CD8-positive, alpha-beta T cell (primary cell): ENCODE measurements at regions of chr17 and their contacts with region 1.

Region 1: GRCh38 chr17:7351665-7352501 is at the start of gene KCTD11:
- DNase-seq: peak in 8 of 9 experiments; percentile 64 to 90 (median 80)
- ATAC-seq: peak; percentile 48
- H3K4me3 ChIP-seq: peak within 1 kb of the TSS; percentile 62 to 73
- H3K4me3 Mint-ChIP-seq: peak within 1 kb of the TSS; percentile 87
- H3K27ac ChIP-seq: peak within 1 kb of the TSS; percentile 53 to 87
- H3K27ac Mint-ChIP-seq: peak within 1 kb of the TSS; percentile 88
- H3K4me1 ChIP-seq: peaks cover 42% of the 10 kb centered on the region
- H3K4me1 Mint-ChIP-seq: peaks cover 38% of the 10 kb centered on the region
- H3K27me3 ChIP-seq: no peaks in the 10 kb centered on the region
- H3K27me3 Mint-ChIP-seq: no peaks in the 10 kb centered on the region
- CTCF ChIP-seq: peak; percentile 20
- total RNA-seq, gene KCTD11: 1.4 to 1.8 TPM

Region 2: DNA sequence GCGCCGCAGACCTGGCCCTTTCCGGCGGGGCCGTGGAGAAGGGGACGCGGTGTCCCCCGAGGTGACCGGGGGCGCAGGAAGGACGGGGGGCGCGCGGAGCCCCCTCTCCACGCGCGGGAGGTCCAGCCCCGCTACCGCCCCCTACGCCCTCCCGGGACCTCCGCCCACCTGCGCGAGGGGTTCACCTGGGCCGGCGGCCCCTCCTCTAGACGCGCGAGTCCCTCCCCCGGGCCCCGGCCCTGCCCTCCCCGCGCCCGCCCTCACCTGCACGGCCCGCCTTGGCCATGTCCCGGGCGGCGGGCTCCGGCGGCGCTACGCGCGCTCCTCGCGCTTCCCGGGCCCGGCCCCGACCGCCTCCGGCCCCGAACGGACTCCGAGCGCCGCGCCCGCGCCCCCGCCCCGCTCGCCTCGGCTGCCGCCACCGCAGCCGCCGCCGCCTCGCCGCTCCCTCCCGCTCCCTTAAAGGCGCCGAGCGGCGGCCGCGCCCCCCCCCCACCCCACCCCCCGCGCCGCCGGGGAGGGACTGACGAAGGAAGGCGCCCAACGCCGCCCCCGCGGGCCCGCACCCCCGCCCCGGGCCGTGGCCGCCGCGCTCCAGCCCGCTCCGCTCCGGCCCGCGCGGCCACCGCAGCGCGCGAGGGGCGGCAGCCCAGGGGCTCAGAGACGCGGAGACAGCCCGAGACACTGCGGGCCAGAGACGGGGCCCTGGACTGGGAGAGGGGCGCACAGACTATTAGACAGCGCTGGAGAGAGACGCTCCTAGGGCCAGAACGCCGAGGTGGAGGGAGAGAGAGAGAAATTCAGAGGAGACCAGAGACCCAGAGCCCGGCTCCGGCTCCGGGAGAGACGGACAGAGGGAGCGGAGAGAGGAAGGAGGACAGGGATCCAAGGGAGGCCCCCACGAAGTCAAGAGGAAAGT is 795.5 kb before region 1 on chr17 and contains the start of gene PITPNM3:
- CTCF ChIA-PET with region 1: no interaction called
- POLR2A ChIA-PET with region 1: no interaction called
- intact Hi-C with region 1: no loop called
- DNase-seq: no peak
- ATAC-seq: peak; percentile 17
- H3K4me3 ChIP-seq: peak within 1 kb of the TSS in 1 of 2 experiments; percentile 35
- H3K4me3 Mint-ChIP-seq: peak within 1 kb of the TSS; percentile 76
- H3K27ac ChIP-seq: no peak within 1 kb of the TSS
- H3K27ac Mint-ChIP-seq: no peak within 1 kb of the TSS
- H3K4me1 ChIP-seq: peaks cover 8% of the 10 kb centered on the region
- H3K4me1 Mint-ChIP-seq: peaks cover 15% of the 10 kb centered on the region
- H3K27me3 ChIP-seq: peaks cover 14 to 21% of the 10 kb centered on the region in 2 experiments
- H3K27me3 Mint-ChIP-seq: peaks cover 50% of the 10 kb centered on the region
- CTCF ChIP-seq: no peak
- total RNA-seq, gene PITPNM3: 0.25 to 0.30 TPM

Region 3: GRCh38 chr17:7045909-7046724 is 305.8 kb before region 1 on chr17:
- CTCF ChIA-PET with region 1: interaction called, 3 read pairs
- POLR2A ChIA-PET with region 1: no interaction called
- intact Hi-C with region 1: loop called in 1 of 2 experiments (anchors 2 kb)
- DNase-seq: peak in 6 of 9 experiments; percentile 43 to 88 (median 59)
- ATAC-seq: peak; percentile 34
- H3K4me3 ChIP-seq: peak overlapping the region; percentile 42 to 58
- H3K4me3 Mint-ChIP-seq: peak overlapping the region; percentile 79
- H3K27ac ChIP-seq: peak overlapping the region; percentile 47 to 73
- H3K27ac Mint-ChIP-seq: peak overlapping the region; percentile 88
- H3K4me1 ChIP-seq: peaks cover 35% of the 10 kb centered on the region
- H3K4me1 Mint-ChIP-seq: peaks cover 36% of the 10 kb centered on the region
- H3K27me3 ChIP-seq: no peaks in the 10 kb centered on the region
- H3K27me3 Mint-ChIP-seq: no peaks in the 10 kb centered on the region
- CTCF ChIP-seq: peak; percentile 89

Region 4: DNA sequence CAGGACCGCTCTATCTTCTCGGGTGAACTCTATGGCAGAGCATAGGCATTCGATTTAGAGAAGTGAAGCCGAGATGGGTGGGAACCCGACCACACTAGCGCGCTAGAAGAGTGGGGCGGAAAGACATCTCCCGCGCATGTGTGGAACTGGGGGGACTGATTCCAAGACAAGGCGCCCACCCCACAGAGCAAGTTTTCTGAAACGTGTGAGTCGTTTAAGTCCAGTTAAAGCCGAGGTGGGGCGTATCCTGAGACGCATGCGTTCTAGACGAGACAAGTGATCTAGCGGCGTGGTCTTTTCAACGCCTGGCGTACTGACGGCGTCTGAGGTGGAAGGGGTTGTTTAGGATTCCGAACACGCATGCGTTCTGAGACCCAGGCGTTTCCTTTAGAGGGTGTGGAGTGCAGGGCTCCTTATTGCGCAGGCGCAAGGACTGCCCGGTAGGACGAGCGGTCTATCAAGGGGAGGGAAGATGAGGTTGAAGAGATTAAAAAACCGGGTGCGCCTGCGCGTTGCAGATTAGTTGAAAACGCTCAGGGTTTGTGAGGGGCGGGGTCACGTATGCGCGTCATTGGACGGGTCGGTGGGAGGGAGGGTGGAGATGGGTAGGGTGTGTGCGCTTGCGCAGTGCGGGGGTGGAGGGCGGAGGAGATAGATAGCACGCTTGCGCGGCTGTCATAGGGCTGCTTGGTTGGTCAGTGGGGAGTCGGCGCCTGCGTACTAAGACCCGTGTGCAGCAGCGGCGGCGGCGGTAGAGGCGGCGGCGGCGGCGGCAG is 44.8 kb before region 1 on chr17 and contains the start of gene EIF5A:
- CTCF ChIA-PET with region 1: interaction called, 9 read pairs
- POLR2A ChIA-PET with region 1: interaction called, 3 read pairs
- intact Hi-C with region 1: loop called (anchors 2 kb)
- DNase-seq: peak; percentile 100
- ATAC-seq: peak; percentile 67
- H3K4me3 ChIP-seq: peak within 1 kb of the TSS; percentile 66 to 92
- H3K4me3 Mint-ChIP-seq: peak within 1 kb of the TSS; percentile 98
- H3K27ac ChIP-seq: peak within 1 kb of the TSS; percentile 91 to 94
- H3K27ac Mint-ChIP-seq: peak within 1 kb of the TSS; percentile 99
- H3K4me1 ChIP-seq: peaks cover 25% of the 10 kb centered on the region
- H3K4me1 Mint-ChIP-seq: peaks cover 40% of the 10 kb centered on the region
- H3K27me3 ChIP-seq: no peaks in the 10 kb centered on the region
- H3K27me3 Mint-ChIP-seq: no peaks in the 10 kb centered on the region
- CTCF ChIP-seq: no peak
- total RNA-seq, gene EIF5A: 581 to 613 TPM

Region 5: DNA sequence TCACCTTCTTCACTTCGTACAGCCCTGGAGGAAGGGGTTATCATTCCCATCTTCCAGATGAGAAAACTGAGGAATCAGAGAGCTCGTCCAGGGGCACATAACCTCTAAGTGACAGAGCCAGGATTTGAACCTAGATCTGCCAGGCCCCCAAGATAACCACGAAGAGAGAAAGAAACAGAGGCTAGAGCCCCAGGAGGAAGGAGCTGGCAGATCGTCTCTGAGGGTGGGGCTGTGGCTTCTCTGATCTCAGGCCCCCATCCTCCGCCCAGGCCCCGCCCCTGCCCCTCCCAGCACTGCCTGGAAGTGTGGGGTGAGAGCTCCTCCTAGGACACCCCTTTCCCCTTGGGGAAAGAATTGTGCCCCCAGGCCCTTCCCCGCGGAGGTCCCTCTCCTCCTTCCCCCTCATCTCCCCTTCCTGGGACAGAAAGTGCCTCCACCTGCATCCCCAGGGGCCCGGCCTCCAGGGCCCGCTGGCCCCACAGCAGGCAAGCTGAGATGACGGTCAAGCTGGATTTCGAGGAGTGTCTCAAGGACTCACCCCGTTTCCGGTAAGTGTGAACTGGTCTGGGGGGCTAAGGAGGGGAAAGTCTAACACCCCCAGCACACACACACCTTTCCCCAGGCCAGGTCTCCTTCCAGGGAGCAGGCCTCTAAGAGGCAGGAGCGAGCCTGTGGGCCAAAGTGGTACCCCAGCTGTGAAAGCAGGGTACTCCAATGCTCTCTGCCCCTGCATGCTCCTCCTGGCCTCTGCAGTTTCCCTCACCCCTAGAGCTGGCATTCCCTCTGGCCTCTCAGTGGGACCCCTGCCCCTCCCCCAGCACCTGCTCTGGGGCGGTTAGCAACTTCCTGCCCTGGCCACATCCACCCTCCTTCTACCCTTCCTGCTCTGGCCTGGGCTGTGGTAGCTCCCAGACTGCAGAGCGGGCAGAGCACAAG is 15.4 kb before region 1 on chr17 and contains the start of gene ACAP1:
- CTCF ChIA-PET with region 1: interaction called, 22 read pairs
- POLR2A ChIA-PET with region 1: interaction called, 49 read pairs
- intact Hi-C with region 1: loop called in 1 of 2 experiments (anchors 1 kb)
- DNase-seq: peak; percentile 72 to 93 (median 89)
- ATAC-seq: peak; percentile 98
- H3K4me3 ChIP-seq: peak within 1 kb of the TSS; percentile 74 to 76
- H3K4me3 Mint-ChIP-seq: peak within 1 kb of the TSS; percentile 94
- H3K27ac ChIP-seq: peak within 1 kb of the TSS; percentile 60 to 65
- H3K27ac Mint-ChIP-seq: peak within 1 kb of the TSS; percentile 97
- H3K4me1 ChIP-seq: peaks cover 55% of the 10 kb centered on the region
- H3K4me1 Mint-ChIP-seq: peaks cover 61% of the 10 kb centered on the region
- H3K27me3 ChIP-seq: no peaks in the 10 kb centered on the region
- H3K27me3 Mint-ChIP-seq: no peaks in the 10 kb centered on the region
- CTCF ChIP-seq: no peak
- total RNA-seq, gene ACAP1: 432 to 451 TPM

Region 6: GRCh38 chr17:7383742-7384488 is 32.0 kb after region 1 on chr17:
- CTCF ChIA-PET with region 1: interaction called, 11 read pairs
- POLR2A ChIA-PET with region 1: interaction called, 4 read pairs
- intact Hi-C with region 1: loop called in 1 of 2 experiments (anchors 1 kb)
- DNase-seq: peak; percentile 60 to 91 (median 80)
- ATAC-seq: peak; percentile 94
- H3K4me3 ChIP-seq: peak overlapping the region; percentile 66 to 75
- H3K4me3 Mint-ChIP-seq: peak overlapping the region; percentile 88
- H3K27ac ChIP-seq: peak overlapping the region; percentile 80 to 92
- H3K27ac Mint-ChIP-seq: peak overlapping the region; percentile 96
- H3K4me1 ChIP-seq: peaks cover 21% of the 10 kb centered on the region
- H3K4me1 Mint-ChIP-seq: peaks cover 8% of the 10 kb centered on the region
- H3K27me3 ChIP-seq: peaks cover 12 to 14% of the 10 kb centered on the region in 2 experiments
- H3K27me3 Mint-ChIP-seq: peaks cover 29% of the 10 kb centered on the region
- CTCF ChIP-seq: no peak

Region 7: GRCh38 chr17:7416323-7416722 is 64.4 kb after region 1 on chr17:
- CTCF ChIA-PET with region 1: interaction called, 6 read pairs
- POLR2A ChIA-PET with region 1: no interaction called
- intact Hi-C with region 1: loop called in 1 of 2 experiments (anchors 1 kb)
- DNase-seq: peak in 1 of 9 experiments; percentile 32
- ATAC-seq: peak; percentile 23
- H3K4me3 ChIP-seq: no peak overlapping the region
- H3K4me3 Mint-ChIP-seq: no peak overlapping the region
- H3K27ac ChIP-seq: no peak overlapping the region
- H3K27ac Mint-ChIP-seq: no peak overlapping the region
- H3K4me1 ChIP-seq: no peaks in the 10 kb centered on the region
- H3K4me1 Mint-ChIP-seq: no peaks in the 10 kb centered on the region
- H3K27me3 ChIP-seq: no peaks in the 10 kb centered on the region
- H3K27me3 Mint-ChIP-seq: no peaks in the 10 kb centered on the region
- CTCF ChIP-seq: no peak

Region 8: DNA sequence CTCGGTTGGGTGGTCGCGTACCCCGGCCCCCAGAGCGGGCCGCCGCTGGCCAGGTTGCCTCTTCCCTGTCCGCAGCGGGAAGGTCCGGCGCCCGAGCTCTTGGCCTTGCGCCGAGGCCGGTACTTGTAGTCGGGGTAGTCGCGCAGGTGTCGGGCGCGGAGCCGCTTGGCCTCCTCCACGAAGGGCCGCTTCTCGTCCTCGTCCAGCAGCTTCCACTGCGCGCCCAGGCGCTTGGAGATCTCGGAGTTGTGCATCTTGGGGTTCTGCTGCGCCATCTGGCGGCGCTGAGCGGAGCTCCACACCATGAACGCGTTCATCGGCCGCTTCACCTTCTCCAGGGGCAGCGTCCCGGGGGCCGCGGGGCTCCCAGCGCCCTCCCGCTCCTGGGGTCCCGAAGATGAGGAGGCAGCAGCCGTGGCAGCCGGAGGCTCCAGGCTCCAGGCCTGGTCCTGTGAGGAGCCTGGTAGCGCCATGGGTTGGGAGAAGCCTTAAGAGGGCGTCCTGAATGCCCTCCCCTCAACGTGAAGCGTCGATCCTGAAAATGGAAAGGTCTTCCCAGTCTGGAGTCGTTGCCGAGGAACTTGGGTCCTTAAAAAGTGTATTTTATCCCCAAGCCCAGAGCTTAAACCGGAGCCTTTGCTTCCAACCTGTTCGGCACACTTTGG is 237.5 kb after region 1 on chr17:
- CTCF ChIA-PET with region 1: interaction called, 19 read pairs
- POLR2A ChIA-PET with region 1: no interaction called
- intact Hi-C with region 1: loop called in 1 of 2 experiments (anchors 1 kb)
- DNase-seq: peak; percentile 40 to 81 (median 68)
- ATAC-seq: peak; percentile 89
- H3K4me3 ChIP-seq: no peak overlapping the region
- H3K4me3 Mint-ChIP-seq: no peak overlapping the region
- H3K27ac ChIP-seq: no peak overlapping the region
- H3K27ac Mint-ChIP-seq: peak overlapping the region; percentile 41
- H3K4me1 ChIP-seq: peaks cover 14% of the 10 kb centered on the region
- H3K4me1 Mint-ChIP-seq: peaks cover 12% of the 10 kb centered on the region
- H3K27me3 ChIP-seq: no peaks in the 10 kb centered on the region
- H3K27me3 Mint-ChIP-seq: no peaks in the 10 kb centered on the region
- CTCF ChIP-seq: peak; percentile 61